Motor neuron (in vitro differentiated cells): ENCODE measurements at regions of chr17 and their contacts with region 1.

Region 1: GRCh38 chr17:48625495-48626244 is 488 bp downstream of the HOXB9 start:
- ATAC-seq: peak; percentile 0 to 84 (median 46)
- H3K4me3 ChIP-seq: peak overlapping the region; percentile 53 to 92 (median 80)
- H3K27ac ChIP-seq: peak overlapping the region; percentile 71 to 96
- H3K4me1 ChIP-seq: peaks cover 17 to 45% of the 10 kb centered on the region in 2 donors

Region 2: GRCh38 chr17:48153691-48154358 is 471.8 kb before region 1 on chr17:
- in situ Hi-C with region 1: loop called in 1 of 9 experiments (anchors 10 kb)
- ATAC-seq: peak; percentile 31 to 86 (median 42)
- H3K4me3 ChIP-seq: no peak overlapping the region
- H3K27ac ChIP-seq: peak overlapping the region in 1 of 2 donors; percentile 97
- H3K4me1 ChIP-seq: peaks cover 67 to 72% of the 10 kb centered on the region in 2 donors